Activated CD4-positive, alpha-beta T cell treated with anti-CD3 and anti-CD28 coated beads, Interleukin-2, amount 10 ng/mL, durations not matched to agents 24 days and 14 days (primary cell): ENCODE measurements at regions of chr2 and their contacts with region 1.

Region 1: GRCh38 chr2:61854474-61855182 is 768 bp upstream of the FAM161A start:
- DNase-seq: peak; percentile 96
- H3K4me3 Mint-ChIP-seq: peak overlapping the region; percentile 96
- H3K27ac Mint-ChIP-seq: peak overlapping the region; percentile 88
- H3K4me1 Mint-ChIP-seq: peaks cover 16% of the 10 kb centered on the region
- H3K27me3 Mint-ChIP-seq: no peaks in the 10 kb centered on the region

Region 2: DNA sequence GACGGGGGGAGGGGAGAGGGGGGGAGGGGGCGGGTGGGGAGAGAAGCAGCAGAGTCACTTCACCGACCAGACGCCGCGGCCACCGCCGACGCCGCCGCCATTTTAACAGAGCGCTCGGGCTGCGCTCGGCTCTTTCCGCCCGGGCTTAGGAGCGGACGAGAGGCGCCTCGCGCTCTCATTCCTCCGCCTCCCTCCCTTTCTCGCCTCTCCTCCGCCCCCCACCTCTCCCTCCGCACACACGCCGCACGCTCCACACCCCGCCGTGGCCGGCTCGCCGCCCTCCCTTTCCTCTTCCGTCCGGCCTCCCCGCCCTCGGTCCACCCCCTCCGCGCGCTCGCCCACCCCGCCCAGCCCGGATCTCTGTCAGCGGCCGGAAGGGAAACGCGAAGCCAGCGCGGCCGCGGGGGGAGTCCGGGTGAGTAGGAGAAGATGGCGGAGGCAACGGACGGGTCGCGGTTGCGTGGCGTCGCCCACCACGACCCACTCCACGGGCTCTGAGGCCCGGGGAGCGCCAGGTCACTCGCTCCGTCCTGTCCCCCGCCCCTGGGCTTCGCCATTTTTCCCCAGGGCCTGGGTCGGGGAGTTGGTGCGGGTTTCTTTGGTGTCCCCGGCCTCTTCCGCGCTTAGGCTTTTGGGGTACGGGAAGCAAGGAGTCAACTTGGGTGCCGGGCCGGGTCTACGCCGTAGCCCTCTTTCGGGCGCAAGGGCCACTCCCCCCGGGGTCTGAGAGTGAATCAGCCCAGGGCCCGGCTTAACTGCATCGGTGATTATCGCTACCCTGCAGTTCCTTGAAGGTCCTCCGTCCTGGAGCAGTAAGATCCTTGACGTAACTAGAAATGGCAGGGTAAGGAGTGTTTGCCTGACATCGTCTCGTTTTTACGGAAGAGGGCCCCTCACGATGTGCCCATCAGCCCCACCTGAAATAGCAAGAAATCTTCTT is 383.4 kb before region 1 on chr2 and contains the start of gene USP34:
- intact Hi-C with region 1: loop called (anchors 10 kb)
- DNase-seq: peak; percentile 96
- H3K4me3 Mint-ChIP-seq: peak within 1 kb of the TSS; percentile 98
- H3K27ac Mint-ChIP-seq: peak within 1 kb of the TSS; percentile 98
- H3K4me1 Mint-ChIP-seq: peaks cover 19% of the 10 kb centered on the region
- H3K27me3 Mint-ChIP-seq: no peaks in the 10 kb centered on the region
- total RNA-seq, gene USP34: 84.3 and 93.8 TPM in 2 replicates

Region 3: DNA sequence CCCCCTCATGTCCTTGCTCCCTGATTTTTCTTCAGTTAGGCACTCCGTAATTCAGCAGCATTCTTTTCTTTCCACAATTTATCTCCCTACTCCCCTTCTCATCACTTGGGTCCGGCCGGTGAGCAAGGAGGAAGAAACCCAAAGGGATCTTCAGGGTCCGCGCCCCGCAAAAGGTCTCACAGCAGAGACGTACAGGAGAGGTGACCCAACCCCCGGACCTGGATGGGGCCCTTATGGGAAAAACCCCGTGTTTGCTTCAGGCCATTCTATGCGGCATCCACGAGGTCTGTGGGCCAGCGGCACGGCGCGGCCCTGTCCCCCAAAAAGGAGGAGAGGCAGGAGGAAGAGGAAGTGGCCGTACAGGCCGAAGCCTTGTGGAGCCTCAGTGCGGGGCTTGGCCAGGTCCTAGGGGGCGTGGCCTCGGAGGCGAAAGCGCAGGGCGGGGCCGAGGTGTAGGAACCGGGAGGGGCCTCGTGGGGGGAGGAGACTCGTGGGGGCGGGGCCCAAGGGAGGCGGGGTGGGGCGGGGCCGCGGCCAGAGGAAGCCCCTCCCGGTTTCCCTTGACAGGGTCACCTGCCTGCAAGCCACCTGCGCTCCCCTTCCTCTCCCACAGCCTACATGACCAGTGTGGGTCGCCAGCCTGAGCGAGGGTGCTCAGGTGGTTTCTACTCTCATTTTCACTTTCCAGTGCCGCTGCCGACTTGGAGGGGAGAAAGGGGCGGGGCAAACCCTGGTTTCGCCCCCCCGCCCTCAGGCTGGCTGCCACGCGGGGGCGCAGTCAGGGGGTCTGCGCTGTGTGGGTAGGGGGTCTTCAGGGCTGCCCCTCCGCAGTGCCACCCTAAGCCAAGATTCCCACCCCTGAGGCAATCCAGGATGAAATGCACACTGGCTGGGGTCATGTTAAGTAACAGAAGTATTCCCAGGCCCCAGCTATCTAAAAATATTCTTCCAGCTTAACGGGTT is 160.0 kb before region 1 on chr2:
- intact Hi-C with region 1: loop called (anchors 1 kb)
- DNase-seq: peak; percentile 95
- H3K4me3 Mint-ChIP-seq: peak overlapping the region; percentile 92
- H3K27ac Mint-ChIP-seq: peak overlapping the region; percentile 93
- H3K4me1 Mint-ChIP-seq: peaks cover 15% of the 10 kb centered on the region
- H3K27me3 Mint-ChIP-seq: peaks cover 2% of the 10 kb centered on the region

Region 4: DNA sequence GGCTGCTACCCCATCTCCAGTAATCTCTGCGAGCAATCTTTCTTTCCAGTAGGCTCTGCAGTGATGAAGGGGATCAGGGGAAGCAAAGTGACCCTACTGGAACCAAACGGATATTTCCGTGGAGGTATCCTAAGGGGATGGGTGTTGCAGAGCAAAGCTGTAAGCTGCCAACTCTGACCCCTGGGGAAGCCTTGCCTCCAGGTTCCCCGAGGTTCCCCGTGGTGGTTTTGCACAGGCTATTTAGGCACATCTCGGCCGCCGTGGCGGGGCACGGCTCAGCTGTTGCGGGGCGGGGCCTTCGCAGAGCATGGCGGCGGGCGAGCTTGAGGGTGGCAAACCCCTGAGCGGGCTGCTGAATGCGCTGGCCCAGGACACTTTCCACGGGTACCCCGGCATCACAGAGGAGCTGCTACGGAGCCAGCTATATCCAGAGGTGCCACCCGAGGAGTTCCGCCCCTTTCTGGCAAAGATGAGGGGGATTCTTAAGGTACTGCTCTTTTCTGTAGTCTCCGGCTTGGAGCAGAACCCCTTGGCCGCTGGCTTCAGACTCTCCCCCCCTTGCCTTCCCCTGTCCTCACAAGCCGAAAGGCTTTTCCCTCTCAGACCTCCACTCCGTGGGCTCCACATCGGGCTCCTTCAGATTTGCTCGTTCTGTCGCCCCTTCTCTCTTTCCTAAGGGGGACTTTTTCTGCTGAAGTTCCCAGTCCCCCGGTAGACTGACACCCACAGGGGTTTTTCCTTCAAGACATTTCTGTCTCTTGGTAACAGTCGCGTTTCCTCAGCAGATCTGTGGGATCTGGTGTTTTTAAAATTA is 51.0 kb after region 1 on chr2 and contains the start of gene COMMD1:
- intact Hi-C with region 1: loop called (anchors 1 kb)
- DNase-seq: peak; percentile 95
- H3K4me3 Mint-ChIP-seq: peak within 1 kb of the TSS; percentile 89
- H3K27ac Mint-ChIP-seq: peak within 1 kb of the TSS; percentile 82
- H3K4me1 Mint-ChIP-seq: peaks cover 10% of the 10 kb centered on the region
- H3K27me3 Mint-ChIP-seq: no peaks in the 10 kb centered on the region
- total RNA-seq, gene COMMD1: 27.2 and 27.6 TPM in 2 replicates

Region 5: GRCh38 chr2:61993444-61994024 is 138.9 kb after region 1 on chr2:
- intact Hi-C with region 1: no loop called
- DNase-seq: peak; percentile 69
- H3K4me3 Mint-ChIP-seq: no peak overlapping the region
- H3K27ac Mint-ChIP-seq: no peak overlapping the region
- H3K4me1 Mint-ChIP-seq: no peaks in the 10 kb centered on the region
- H3K27me3 Mint-ChIP-seq: no peaks in the 10 kb centered on the region